ENCODE measurements at regions of chr16 and their contacts with region 1.

Region 1: DNA sequence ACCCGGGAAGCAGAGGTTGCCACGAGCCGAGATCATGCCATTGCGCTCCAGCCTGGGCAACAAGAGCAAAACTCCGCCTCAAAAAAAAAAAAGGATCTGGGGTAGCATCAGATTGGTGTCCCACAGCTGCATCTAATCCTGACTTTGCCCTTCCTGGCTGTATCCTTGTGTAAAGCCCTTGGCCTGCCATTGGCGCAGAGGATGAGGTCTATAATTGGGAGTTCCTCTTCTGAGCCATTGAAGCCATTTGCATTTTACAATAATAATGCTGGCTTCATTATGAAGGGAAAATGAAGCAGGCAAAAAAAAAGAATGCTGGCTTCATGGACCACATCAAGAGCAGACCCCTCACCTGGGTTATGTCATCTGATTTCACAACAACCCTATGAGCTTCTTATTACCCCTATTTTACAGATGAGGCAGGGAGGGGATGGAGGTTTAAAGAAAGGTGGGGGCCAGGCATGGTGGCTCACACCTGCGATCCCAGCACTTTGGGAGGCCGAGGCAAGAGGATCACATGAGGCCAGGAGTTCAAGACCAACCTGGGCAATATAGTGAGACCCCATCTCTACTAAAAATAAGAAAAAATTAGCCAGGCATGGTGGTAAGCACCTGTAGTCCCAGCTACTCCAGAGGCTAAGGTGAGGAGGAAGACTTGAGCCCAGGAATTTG is 1.2 kb upstream of the LITAFD start:
- DNase-seq: no peak
- H3K4me3 Mint-ChIP-seq: no peak overlapping the region
- H3K27ac Mint-ChIP-seq: no peak overlapping the region
- H3K4me1 Mint-ChIP-seq: peaks cover 3% of the 10 kb centered on the region
- H3K27me3 Mint-ChIP-seq: no peaks in the 10 kb centered on the region

Region 2: GRCh38 chr16:8567750-8568617 is 313.0 kb before region 1 on chr16:
- intact Hi-C with region 1: loop called (anchors 2 kb)
- DNase-seq: peak; percentile 71
- H3K4me3 Mint-ChIP-seq: no peak overlapping the region
- H3K27ac Mint-ChIP-seq: no peak overlapping the region
- H3K4me1 Mint-ChIP-seq: peaks cover 6% of the 10 kb centered on the region
- H3K27me3 Mint-ChIP-seq: no peaks in the 10 kb centered on the region

Region 3: GRCh38 chr16:8660841-8661301 is 220.1 kb before region 1 on chr16:
- intact Hi-C with region 1: loop called (anchors 1 kb)
- DNase-seq: peak; percentile 44
- H3K4me3 Mint-ChIP-seq: no peak overlapping the region
- H3K27ac Mint-ChIP-seq: no peak overlapping the region
- H3K4me1 Mint-ChIP-seq: peaks cover 8% of the 10 kb centered on the region
- H3K27me3 Mint-ChIP-seq: no peaks in the 10 kb centered on the region

Region 4: GRCh38 chr16:9123871-9124270 is 242.9 kb after region 1 on chr16:
- intact Hi-C with region 1: no loop called
- DNase-seq: no peak
- H3K4me3 Mint-ChIP-seq: no peak overlapping the region
- H3K27ac Mint-ChIP-seq: no peak overlapping the region
- H3K4me1 Mint-ChIP-seq: peaks cover 35% of the 10 kb centered on the region
- H3K27me3 Mint-ChIP-seq: no peaks in the 10 kb centered on the region